ENCODE measurements at regions of chr3 and their contacts with region 1.

Region 1: DNA sequence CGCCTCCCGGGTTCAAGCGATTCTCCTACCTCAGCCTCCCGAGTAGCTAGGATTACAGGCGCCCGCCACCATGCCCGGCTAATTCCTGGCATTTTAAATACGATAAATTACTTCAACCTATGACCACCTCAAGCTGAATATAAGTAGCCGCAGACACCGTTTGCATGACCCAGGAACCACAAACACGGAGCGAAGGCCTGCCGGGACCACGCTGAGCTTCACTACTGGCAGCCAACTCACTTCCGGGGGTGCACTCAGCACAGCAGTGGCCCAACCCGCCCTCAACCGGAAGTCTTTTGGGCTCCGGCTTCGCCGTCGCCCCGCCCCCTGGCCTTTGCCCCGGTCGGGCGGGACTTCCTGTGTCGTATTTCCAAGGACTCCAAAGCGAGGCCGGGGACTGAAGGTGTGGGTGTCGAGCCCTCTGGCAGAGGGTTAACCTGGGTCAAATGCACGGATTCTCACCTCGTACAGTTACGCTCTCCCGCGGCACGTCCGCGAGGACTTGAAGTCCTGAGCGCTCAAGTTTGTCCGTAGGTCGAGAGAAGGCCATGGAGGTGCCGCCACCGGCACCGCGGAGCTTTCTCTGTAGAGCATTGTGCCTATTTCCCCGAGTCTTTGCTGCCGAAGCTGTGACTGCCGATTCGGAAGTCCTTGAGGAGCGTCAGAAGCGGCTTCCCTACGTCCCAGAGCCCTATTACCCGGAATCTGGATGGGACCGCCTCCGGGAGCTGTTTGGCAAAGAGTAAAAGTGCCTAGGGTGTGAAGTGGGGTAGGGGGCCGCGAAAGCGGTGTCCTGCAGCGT is at the start of gene TIMMDC1:
- H3K4me3 Mint-ChIP-seq: peak within 1 kb of the TSS; percentile 99
- H3K27ac Mint-ChIP-seq: peak within 1 kb of the TSS; percentile 99
- H3K4me1 Mint-ChIP-seq: peaks cover 34% of the 10 kb centered on the region
- H3K27me3 Mint-ChIP-seq: no peaks in the 10 kb centered on the region

Region 2: DNA sequence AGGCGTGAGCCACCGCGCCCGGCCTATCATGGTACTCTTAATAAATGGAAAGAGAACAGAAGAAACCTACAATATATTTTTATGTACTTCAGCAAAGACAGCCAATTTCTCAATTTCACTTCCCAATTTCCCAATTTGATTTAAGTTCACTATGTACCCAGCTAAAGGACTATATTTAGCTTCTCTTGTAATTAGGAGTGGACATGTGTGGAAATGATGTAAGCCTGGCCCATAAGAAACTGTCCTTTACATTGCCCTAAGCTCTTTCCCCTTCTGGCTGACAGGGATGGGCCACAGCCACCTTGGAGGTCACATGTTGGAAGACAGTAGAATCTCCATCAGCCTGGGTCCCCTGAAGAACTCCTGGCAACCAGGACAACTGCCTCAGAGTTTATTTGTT is 41.1 kb before region 1 on chr3:
- intact Hi-C with region 1: no loop called
- H3K4me3 Mint-ChIP-seq: no peak overlapping the region
- H3K27ac Mint-ChIP-seq: peak overlapping the region; percentile 72
- H3K4me1 Mint-ChIP-seq: peaks cover 60% of the 10 kb centered on the region
- H3K27me3 Mint-ChIP-seq: no peaks in the 10 kb centered on the region

Region 3: GRCh38 chr3:119469381-119470189 is 28.8 kb before region 1 on chr3:
- intact Hi-C with region 1: loop called (anchors 2 kb)
- H3K4me3 Mint-ChIP-seq: peak overlapping the region; percentile 92
- H3K27ac Mint-ChIP-seq: peak overlapping the region; percentile 98
- H3K4me1 Mint-ChIP-seq: peaks cover 39% of the 10 kb centered on the region
- H3K27me3 Mint-ChIP-seq: no peaks in the 10 kb centered on the region

Measured in dendritic cell treated with granulocyte-macrophage colony-stimulating factor and Interleukin-4, amounts not matched to agents 40 ng/mL and 50 ng/mL, for 4 days (primary cell).